WTC11 (cell line): ENCODE measurements at regions of chr17 and their contacts with region 1.

Region 1: GRCh38 chr17:7627250-7628121 is at the start of gene SAT2:
- DNase-seq: peak; percentile 99
- ATAC-seq: peak; percentile 87
- H3K4me3 Mint-ChIP-seq: peak within 1 kb of the TSS; percentile 85
- H3K27ac Mint-ChIP-seq: peak within 1 kb of the TSS; percentile 85
- H3K4me1 Mint-ChIP-seq: peaks cover 9% of the 10 kb centered on the region
- H3K27me3 Mint-ChIP-seq: no peaks in the 10 kb centered on the region
- CTCF ChIP-seq: no peak
- total RNA-seq, gene SAT2: 68.3 to 75.8 TPM (median 73.1 TPM) in 3 replicates

Region 2: DNA sequence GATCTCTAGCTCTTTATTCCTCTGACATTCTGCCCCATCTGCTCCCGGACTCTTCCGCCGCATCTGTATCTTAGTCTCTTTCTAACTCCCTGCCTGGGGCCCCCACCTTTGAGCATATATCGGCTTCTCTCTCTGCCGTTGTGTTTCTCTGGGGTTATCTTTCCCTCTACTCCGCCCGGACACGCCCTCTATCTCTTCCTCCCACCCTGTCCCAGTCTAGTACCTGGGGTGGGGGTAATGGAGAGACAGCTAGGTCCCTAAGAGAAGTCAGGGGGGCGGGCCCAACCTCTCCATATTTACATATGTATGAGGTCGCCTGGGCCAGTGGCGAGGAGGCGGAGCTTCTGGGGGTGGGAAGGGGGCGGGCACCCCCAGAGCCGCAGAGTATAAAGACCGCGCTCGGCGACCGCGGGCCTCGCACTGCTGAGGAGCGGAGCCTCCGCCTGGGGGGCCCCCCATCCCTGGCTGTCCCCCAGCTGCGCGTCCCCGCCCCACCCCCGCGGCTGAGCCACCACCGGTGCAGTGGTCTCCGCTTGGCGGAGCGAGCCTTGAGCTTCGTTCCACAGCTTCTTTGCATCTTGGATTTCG is 23.1 kb after region 1 on chr17 and contains the start of gene ATP1B2:
- CTCF ChIA-PET with region 1: interaction called, 88 read pairs
- POLR2A ChIA-PET with region 1: interaction called, 20 read pairs
- DNase-seq: peak; percentile 96
- ATAC-seq: peak; percentile 97
- H3K4me3 Mint-ChIP-seq: peak within 1 kb of the TSS; percentile 83
- H3K27ac Mint-ChIP-seq: peak within 1 kb of the TSS; percentile 73
- H3K4me1 Mint-ChIP-seq: peaks cover 33% of the 10 kb centered on the region
- H3K27me3 Mint-ChIP-seq: peaks cover 53% of the 10 kb centered on the region
- CTCF ChIP-seq: no peak
- total RNA-seq, gene ATP1B2: 29.1 to 37.5 TPM (median 35.9 TPM) in 3 replicates

Region 3: GRCh38 chr17:7673239-7673638 is 45.8 kb after region 1 on chr17:
- CTCF ChIA-PET with region 1: interaction called, 74 read pairs
- POLR2A ChIA-PET with region 1: interaction called, 3 read pairs
- DNase-seq: peak; percentile 78
- ATAC-seq: no peak
- H3K4me3 Mint-ChIP-seq: no peak overlapping the region
- H3K27ac Mint-ChIP-seq: no peak overlapping the region; the same call in 1 of the 2 replicates
- H3K4me1 Mint-ChIP-seq: peaks cover 31% of the 10 kb centered on the region
- H3K27me3 Mint-ChIP-seq: no peaks in the 10 kb centered on the region; the same call in 1 of the 2 replicates
- CTCF ChIP-seq: peak; percentile 58

Region 4: GRCh38 chr17:7716901-7717755 is 89.6 kb after region 1 on chr17 and contains the start of gene DNAH2:
- CTCF ChIA-PET with region 1: interaction called, 24 read pairs
- POLR2A ChIA-PET with region 1: interaction called, 7 read pairs
- DNase-seq: peak; percentile 96
- ATAC-seq: peak; percentile 88
- H3K4me3 Mint-ChIP-seq: peak within 1 kb of the TSS; percentile 83
- H3K27ac Mint-ChIP-seq: peak within 1 kb of the TSS; percentile 72; the same call in 1 of the 2 replicates
- H3K4me1 Mint-ChIP-seq: peaks cover 36% of the 10 kb centered on the region
- H3K27me3 Mint-ChIP-seq: peaks cover 47% of the 10 kb centered on the region
- CTCF ChIP-seq: no peak
- total RNA-seq, gene DNAH2: 0.17 to 0.34 TPM (median 0.27 TPM) in 3 replicates

Region 5: DNA sequence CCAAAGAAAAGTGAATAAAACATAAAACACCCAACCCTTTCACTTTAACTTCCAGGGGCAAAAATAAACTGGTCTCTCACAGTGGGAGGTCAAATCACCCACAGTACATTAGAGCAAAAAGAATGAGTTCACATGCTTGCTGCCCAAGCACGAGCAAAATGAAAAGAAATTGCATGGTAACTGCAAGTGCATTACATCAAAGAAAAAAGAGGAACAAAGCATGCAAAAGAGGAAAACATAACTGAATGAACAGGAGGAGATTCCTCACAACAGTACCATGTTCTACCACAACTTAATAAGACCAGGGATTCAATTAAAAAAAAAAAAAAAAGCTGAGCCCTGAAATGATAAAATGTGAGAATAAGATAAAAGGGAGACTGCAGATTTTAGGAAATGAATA is 102.3 kb after region 1 on chr17:
- CTCF ChIA-PET with region 1: no interaction called
- POLR2A ChIA-PET with region 1: no interaction called
- DNase-seq: no peak
- ATAC-seq: no peak
- H3K4me3 Mint-ChIP-seq: no peak overlapping the region
- H3K27ac Mint-ChIP-seq: no peak overlapping the region
- H3K4me1 Mint-ChIP-seq: no peaks in the 10 kb centered on the region
- H3K27me3 Mint-ChIP-seq: peaks cover 13% of the 10 kb centered on the region
- CTCF ChIP-seq: no peak